CD4-positive, alpha-beta T cell (primary cell): ENCODE measurements at regions of chr12 and their contacts with region 1.

Region 1: DNA sequence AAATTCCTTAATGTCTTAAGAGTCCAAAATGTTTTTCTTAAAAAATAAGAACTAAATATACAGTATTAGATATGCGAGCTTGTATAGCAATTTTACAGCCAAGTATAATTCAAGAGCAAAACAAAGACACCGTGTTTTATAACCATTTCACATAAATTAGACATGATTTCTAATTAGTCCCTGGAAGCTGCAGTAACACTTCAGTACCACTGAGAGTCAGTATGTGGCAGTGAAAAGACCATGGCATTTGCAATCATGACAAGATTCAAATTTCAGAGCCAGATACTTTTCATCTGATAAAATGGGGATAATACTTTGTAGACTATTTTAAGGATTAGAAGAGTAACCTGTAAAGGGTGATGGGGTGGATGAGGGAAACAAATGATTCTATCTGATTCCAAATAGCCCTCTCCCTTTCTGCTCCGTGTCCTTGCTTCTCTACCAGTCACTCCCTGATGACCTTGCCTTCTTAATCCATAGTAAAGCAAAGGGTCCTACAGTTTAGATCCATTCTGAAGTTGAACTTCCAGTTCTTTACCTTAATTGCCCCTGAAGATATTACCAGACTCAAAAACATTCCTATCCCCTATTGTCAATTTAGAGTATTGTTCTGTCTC is 145.4 kb upstream of the ABCD2 start:
- DNase-seq: peak in 3 of 14 experiments; percentile 31 to 37 (median 31)
- ATAC-seq: peak; percentile 37
- H3K4me3 ChIP-seq: no peak overlapping the region
- H3K4me3 Mint-ChIP-seq: no peak overlapping the region
- H3K27ac ChIP-seq: no peak overlapping the region
- H3K27ac Mint-ChIP-seq: no peak overlapping the region
- H3K4me1 ChIP-seq: no peaks in the 10 kb centered on the region
- H3K4me1 Mint-ChIP-seq: no peaks in the 10 kb centered on the region
- H3K27me3 ChIP-seq: no peaks in the 10 kb centered on the region
- H3K27me3 Mint-ChIP-seq: no peaks in the 10 kb centered on the region
- CTCF ChIP-seq: peak; percentile 41

Region 2: DNA sequence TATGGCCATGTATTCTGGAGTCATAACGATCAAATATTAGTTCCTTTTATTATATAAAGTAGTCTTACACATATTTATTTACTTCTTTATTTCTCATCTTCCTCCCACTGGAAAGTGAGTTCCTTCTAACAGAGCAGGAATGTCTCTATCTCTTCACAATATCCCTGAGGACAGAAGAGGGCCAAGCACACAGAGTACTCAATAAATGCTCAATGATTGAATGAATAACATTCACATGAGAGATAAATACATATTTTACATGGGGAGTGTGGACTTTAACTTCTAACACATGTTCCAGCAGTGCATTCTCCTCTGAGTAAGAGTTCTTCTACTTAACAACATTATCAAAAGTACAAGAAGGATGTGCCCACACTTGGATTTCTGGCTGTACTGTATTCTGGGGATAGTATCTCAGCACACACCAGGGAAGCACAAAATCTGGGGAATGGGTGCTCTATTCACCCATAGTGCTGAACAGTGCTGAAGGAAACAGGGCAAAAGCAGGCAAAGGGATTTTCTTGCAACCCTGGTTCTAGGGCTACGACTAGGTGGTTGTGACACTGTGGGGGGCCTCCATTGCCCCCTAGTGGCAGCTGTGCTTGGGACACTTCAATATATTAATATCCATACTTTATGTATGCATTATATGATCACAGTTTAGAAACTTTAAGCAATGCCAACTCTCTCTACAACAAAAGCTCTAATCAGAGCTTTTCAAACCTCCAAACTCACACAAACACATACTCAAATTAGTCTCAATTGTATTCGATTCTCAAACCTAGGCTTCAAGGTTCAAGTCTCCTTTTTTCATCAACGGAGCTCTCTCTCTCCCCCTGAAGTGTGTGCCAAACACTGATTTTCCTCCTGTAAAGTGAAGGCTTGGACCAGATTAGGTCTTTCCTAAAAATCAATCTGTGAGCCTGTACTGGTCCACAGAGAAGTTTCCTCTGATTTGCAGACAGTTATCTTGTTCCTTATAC is 225.4 kb after region 1 on chr12:
- CTCF ChIA-PET with region 1: no interaction called
- POLR2A ChIA-PET with region 1: no interaction called
- intact Hi-C with region 1: loop called in 1 of 2 experiments (anchors 5 kb)
- DNase-seq: peak; percentile 28 to 67 (median 46)
- ATAC-seq: peak; percentile 64
- H3K4me3 ChIP-seq: no peak overlapping the region
- H3K4me3 Mint-ChIP-seq: no peak overlapping the region
- H3K27ac ChIP-seq: no peak overlapping the region
- H3K27ac Mint-ChIP-seq: no peak overlapping the region
- H3K4me1 ChIP-seq: no peaks in the 10 kb centered on the region
- H3K4me1 Mint-ChIP-seq: no peaks in the 10 kb centered on the region
- H3K27me3 ChIP-seq: no peaks in the 10 kb centered on the region
- H3K27me3 Mint-ChIP-seq: no peaks in the 10 kb centered on the region
- CTCF ChIP-seq: peak; percentile 87